B cell (primary cell): ENCODE measurements at regions of chr12 and their contacts with region 1.

Region 1: DNA sequence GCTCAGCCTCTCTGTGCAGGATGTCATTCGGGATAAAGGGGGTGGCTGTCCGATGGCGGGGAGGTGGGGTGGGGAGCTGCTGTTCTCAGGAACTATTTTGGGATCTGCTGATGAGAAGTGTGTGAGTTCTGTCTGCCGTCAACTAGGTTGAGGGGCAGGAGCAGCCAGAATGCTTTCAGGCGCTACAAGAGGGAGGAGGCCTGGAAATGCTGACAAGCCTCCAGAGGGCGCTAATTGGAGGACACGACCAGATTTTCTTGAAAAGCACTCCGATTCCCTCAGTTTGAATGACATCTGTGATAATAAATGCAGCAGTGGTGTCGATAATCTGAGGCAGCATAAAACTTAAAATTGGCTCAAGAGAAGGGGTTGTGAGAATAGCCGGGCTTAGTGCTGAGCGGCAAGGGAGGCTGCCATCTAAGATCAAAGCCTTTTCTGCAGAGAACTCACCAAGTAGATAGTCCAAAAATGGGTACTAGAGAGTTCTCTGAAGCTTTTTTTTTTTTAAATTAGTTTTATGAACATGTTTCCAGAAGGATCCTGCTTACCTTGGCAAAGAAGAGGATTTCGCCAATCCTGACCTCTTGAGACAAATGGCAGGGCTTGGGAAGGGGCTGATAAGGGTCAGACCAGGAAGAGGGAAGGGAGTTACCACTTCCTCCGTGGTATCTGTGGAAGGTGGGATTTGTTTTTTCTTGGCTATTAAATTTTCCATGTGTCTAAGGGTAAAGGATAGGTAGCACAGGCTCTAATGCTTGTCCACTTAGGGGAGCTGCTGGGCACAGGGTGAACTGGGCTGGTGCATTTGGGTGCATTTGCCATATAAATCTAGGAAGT is 94.4 kb downstream of the CRACR2A start:
- DNase-seq: peak; percentile 25
- ATAC-seq: no peak
- H3K4me3 ChIP-seq: no peak overlapping the region
- H3K4me3 Mint-ChIP-seq: no peak overlapping the region
- H3K27ac ChIP-seq: no peak overlapping the region
- H3K27ac Mint-ChIP-seq: no peak overlapping the region
- H3K4me1 ChIP-seq: no peaks in the 10 kb centered on the region
- H3K4me1 Mint-ChIP-seq: no peaks in the 10 kb centered on the region
- H3K27me3 ChIP-seq: no peaks in the 10 kb centered on the region
- H3K27me3 Mint-ChIP-seq: no peaks in the 10 kb centered on the region
- CTCF ChIP-seq: peak; percentile 17

Region 2: GRCh38 chr12:3777206-3777809 is 118.8 kb after region 1 on chr12:
- CTCF ChIA-PET with region 1: interaction called, 6 read pairs
- POLR2A ChIA-PET with region 1: no interaction called
- intact Hi-C with region 1: loop called (anchors 1 kb)
- DNase-seq: peak; percentile 52
- ATAC-seq: no peak
- H3K4me3 ChIP-seq: no peak overlapping the region
- H3K4me3 Mint-ChIP-seq: no peak overlapping the region
- H3K27ac ChIP-seq: no peak overlapping the region
- H3K27ac Mint-ChIP-seq: no peak overlapping the region
- H3K4me1 ChIP-seq: no peaks in the 10 kb centered on the region
- H3K4me1 Mint-ChIP-seq: no peaks in the 10 kb centered on the region
- H3K27me3 ChIP-seq: peaks cover 0 to 2% (median 0%) of the 10 kb centered on the region in 4 experiments
- H3K27me3 Mint-ChIP-seq: no peaks in the 10 kb centered on the region
- CTCF ChIP-seq: peak; percentile 71

Region 3: DNA sequence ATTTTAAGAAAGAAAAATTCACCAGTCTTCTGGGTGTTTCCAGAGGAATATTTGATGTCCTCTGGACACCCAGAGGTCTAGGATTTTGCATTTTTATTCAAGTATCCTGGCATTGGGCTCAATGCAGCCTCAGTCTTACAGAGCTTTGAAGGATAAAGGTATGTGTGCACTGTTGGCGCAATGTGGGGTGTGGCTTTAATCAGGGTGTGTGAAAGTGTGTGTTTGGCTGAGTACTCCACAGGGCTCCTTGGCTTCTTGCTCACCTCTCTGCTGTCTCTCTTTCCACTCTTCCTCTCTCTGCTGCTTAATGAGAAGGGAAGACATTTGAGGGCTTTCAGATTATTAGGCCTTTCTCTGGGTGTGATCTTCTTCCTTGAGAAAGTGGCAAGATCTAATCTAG is 421.7 kb after region 1 on chr12:
- CTCF ChIA-PET with region 1: no interaction called
- POLR2A ChIA-PET with region 1: no interaction called
- intact Hi-C with region 1: no loop called
- DNase-seq: no peak
- ATAC-seq: no peak
- H3K4me3 ChIP-seq: no peak overlapping the region
- H3K4me3 Mint-ChIP-seq: no peak overlapping the region
- H3K27ac ChIP-seq: no peak overlapping the region
- H3K27ac Mint-ChIP-seq: no peak overlapping the region
- H3K4me1 ChIP-seq: no peaks in the 10 kb centered on the region
- H3K4me1 Mint-ChIP-seq: no peaks in the 10 kb centered on the region
- H3K27me3 ChIP-seq: peaks cover 0 to 14% (median 0%) of the 10 kb centered on the region in 4 experiments
- H3K27me3 Mint-ChIP-seq: peaks cover 30% of the 10 kb centered on the region
- CTCF ChIP-seq: no peak